Naive thymus-derived CD4-positive, alpha-beta T cell (primary cell): ENCODE measurements at regions of chr5 and their contacts with region 1.

Region 1: DNA sequence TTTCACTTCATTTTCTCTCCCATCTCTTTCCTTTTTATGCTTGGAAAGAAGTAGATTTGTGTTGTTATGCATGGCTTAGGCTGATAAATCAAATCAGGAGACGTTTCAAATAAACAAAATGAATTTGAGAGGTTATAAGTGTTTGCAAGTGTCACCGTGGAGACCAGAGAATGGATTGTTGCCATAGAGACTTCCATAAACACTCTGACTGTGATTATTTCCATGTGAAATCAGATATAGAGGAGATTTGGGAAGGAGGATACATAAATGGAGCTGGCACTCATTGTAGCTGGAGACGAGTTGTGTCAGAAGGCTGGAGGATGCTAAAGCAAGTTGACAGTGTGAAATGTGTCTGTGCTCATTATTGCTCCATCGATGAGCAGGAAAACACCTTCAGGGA is 84.2 kb upstream of the PCSK1 start:
- DNase-seq: no peak
- ATAC-seq: no peak
- H3K4me3 ChIP-seq: no peak overlapping the region
- H3K4me3 Mint-ChIP-seq: no peak overlapping the region
- H3K27ac ChIP-seq: no peak overlapping the region
- H3K27ac Mint-ChIP-seq: no peak overlapping the region
- H3K4me1 ChIP-seq: no peaks in the 10 kb centered on the region
- H3K4me1 Mint-ChIP-seq: no peaks in the 10 kb centered on the region
- H3K27me3 ChIP-seq: no peaks in the 10 kb centered on the region
- H3K27me3 Mint-ChIP-seq: peaks cover 0 to 26% (median 8%) of the 10 kb centered on the region in 5 donors

Region 2: GRCh38 chr5:96315431-96315830 is 201.9 kb before region 1 on chr5:
- CTCF ChIA-PET with region 1: no interaction called
- POLR2A ChIA-PET with region 1: no interaction called
- intact Hi-C with region 1: no loop called
- DNase-seq: no peak
- ATAC-seq: no peak
- H3K4me3 ChIP-seq: no peak overlapping the region
- H3K4me3 Mint-ChIP-seq: no peak overlapping the region
- H3K27ac ChIP-seq: no peak overlapping the region
- H3K27ac Mint-ChIP-seq: no peak overlapping the region
- H3K4me1 ChIP-seq: no peaks in the 10 kb centered on the region
- H3K4me1 Mint-ChIP-seq: no peaks in the 10 kb centered on the region
- H3K27me3 ChIP-seq: no peaks in the 10 kb centered on the region
- H3K27me3 Mint-ChIP-seq: peaks cover 16 to 35% (median 22%) of the 10 kb centered on the region in 5 donors

Region 3: GRCh38 chr5:96565582-96566265 is 48.4 kb after region 1 on chr5:
- CTCF ChIA-PET with region 1: no interaction called
- POLR2A ChIA-PET with region 1: no interaction called
- intact Hi-C with region 1: loop called in 1 of 2 experiments (anchors 2 kb)
- DNase-seq: no peak
- ATAC-seq: no peak
- H3K4me3 ChIP-seq: no peak overlapping the region
- H3K4me3 Mint-ChIP-seq: no peak overlapping the region
- H3K27ac ChIP-seq: no peak overlapping the region
- H3K27ac Mint-ChIP-seq: no peak overlapping the region
- H3K4me1 ChIP-seq: peaks cover 0 to 3% of the 10 kb centered on the region in 2 donors
- H3K4me1 Mint-ChIP-seq: peaks cover 4 to 14% (median 9%) of the 10 kb centered on the region in 7 donors
- H3K27me3 ChIP-seq: no peaks in the 10 kb centered on the region
- H3K27me3 Mint-ChIP-seq: peaks cover 0 to 21% (median 5%) of the 10 kb centered on the region in 5 donors